Activated T-helper 2 cell treated with anti-CD3 and anti-CD28 coated beads, Interferon-gamma antibody, Interleukin-2, Interleukin-4, amounts not matched to agents 10 μg/mL and 5 μg/mL and 100 μg/mL, durations not matched to agents 14 hours and 24 hours and 36 hours (primary cell): ENCODE measurements at regions of chr6 and their contacts with region 1.

Region 1: DNA sequence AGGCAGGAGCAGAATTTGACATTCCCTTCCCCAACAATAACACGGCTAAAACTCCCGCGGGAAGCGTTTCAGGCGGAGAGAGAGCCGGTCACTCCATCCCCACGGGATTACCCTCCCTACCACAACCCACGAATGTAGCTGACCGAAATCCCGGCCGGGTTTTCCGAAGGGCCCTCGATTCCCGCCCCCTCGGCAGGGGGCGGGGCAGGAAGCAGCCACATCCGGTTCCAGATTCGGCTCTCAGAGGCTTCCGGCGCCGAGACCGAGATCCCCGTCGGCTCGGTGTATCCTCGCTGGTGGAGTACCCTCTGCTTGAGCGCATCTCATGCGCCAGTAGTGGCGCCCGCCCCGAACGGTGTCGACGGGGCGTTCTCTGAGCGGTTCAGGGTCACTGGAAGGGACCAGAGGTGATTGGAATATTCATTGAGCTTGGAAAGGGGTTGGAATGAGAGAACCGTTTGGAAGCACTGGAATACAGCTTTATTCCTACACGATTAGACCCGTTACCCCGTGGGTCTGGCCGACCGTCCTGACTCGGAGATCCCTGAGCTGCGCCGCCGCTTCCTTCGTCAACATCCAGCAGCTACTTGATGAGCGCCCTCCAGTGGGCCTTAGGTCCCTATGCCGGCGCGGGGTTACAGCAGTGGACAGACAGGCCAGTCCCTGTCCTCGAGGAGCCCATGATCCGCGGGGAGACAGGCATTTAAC is 649 bp upstream of the RGL2 start:
- DNase-seq: peak; percentile 92
- H3K4me3 Mint-ChIP-seq: peak overlapping the region; percentile 93
- H3K27ac Mint-ChIP-seq: peak overlapping the region; percentile 99
- H3K4me1 Mint-ChIP-seq: peaks cover 24% of the 10 kb centered on the region
- H3K27me3 Mint-ChIP-seq: no peaks in the 10 kb centered on the region

Region 2: GRCh38 chr6:33276864-33277662 is 22.3 kb before region 1 on chr6 and contains the start of gene B3GALT4:
- intact Hi-C with region 1: loop called (anchors 2 kb)
- DNase-seq: peak; percentile 73
- H3K4me3 Mint-ChIP-seq: peak within 1 kb of the TSS; percentile 98
- H3K27ac Mint-ChIP-seq: peak within 1 kb of the TSS; percentile 89
- H3K4me1 Mint-ChIP-seq: peaks cover 35% of the 10 kb centered on the region
- H3K27me3 Mint-ChIP-seq: no peaks in the 10 kb centered on the region
- total RNA-seq, gene B3GALT4: 5.1 and 6.5 TPM in 2 replicates

Region 3: DNA sequence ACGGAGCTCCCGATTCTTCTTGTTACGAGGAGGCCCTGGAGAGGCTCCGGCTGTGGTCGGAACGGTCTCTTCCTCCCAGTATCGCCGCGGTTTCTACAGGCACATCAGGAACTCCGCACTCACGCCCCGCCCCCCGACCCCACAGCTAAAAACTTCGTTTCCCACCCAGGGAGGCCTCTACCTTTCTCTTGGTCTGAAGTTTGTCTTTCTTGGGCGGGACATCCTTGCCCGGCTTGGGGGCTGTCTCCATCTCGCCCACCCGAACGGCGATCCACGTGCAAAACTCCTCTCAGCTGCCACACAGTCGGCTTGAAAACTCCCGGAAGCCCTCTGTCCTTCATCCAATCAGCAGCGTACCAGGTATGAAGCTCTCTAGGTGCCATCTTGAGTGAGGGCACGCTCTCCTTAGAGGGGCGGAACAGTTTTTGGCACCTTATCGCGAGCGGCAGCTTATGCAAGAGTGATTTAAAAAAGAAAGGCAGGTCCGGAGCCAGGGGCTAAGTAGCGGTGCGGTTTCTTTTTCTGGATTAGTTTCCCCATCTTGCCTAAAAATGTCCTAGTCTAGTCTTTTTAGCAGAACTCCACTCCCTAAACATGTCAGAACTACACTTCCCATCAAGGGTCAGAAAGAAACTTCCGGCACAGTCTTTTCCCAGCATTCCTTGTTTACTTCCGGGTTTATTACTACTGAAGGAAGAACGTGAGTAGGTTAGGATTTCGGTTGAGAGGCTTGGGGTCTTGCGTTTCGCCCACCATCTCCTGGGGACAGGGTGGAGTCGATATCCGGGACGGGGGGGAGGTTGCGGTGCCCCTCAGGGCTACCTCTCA is 10.3 kb before region 1 on chr6 and contains the starts of genes PFDN6 and WDR46:
- intact Hi-C with region 1: loop called (anchors 1 kb)
- DNase-seq: peak; percentile 83
- H3K4me3 Mint-ChIP-seq: peak within 1 kb of the TSS; percentile 98
- H3K27ac Mint-ChIP-seq: peak within 1 kb of the TSS; percentile 88
- H3K4me1 Mint-ChIP-seq: peaks cover 25% of the 10 kb centered on the region
- H3K27me3 Mint-ChIP-seq: no peaks in the 10 kb centered on the region
- total RNA-seq, gene PFDN6: 104 and 117 TPM in 2 replicates
- total RNA-seq, gene WDR46: 87.3 and 98.3 TPM in 2 replicates

Region 4: GRCh38 chr6:33312409-33313158 is 13.2 kb after region 1 on chr6:
- intact Hi-C with region 1: loop called (anchors 1 kb)
- DNase-seq: peak; percentile 78
- H3K4me3 Mint-ChIP-seq: peak overlapping the region; percentile 99
- H3K27ac Mint-ChIP-seq: peak overlapping the region; percentile 98
- H3K4me1 Mint-ChIP-seq: peaks cover 32% of the 10 kb centered on the region
- H3K27me3 Mint-ChIP-seq: no peaks in the 10 kb centered on the region

Region 5: GRCh38 chr6:33407132-33407718 is 107.8 kb after region 1 on chr6:
- intact Hi-C with region 1: no loop called
- DNase-seq: no peak
- H3K4me3 Mint-ChIP-seq: no peak overlapping the region
- H3K27ac Mint-ChIP-seq: peak overlapping the region; percentile 24
- H3K4me1 Mint-ChIP-seq: peaks cover 29% of the 10 kb centered on the region
- H3K27me3 Mint-ChIP-seq: no peaks in the 10 kb centered on the region

Region 6: GRCh38 chr6:33417903-33418689 is 118.7 kb after region 1 on chr6 and contains the start of gene CUTA:
- intact Hi-C with region 1: loop called (anchors 5 kb)
- DNase-seq: peak; percentile 99
- H3K4me3 Mint-ChIP-seq: peak within 1 kb of the TSS; percentile 96
- H3K27ac Mint-ChIP-seq: peak within 1 kb of the TSS; percentile 100
- H3K4me1 Mint-ChIP-seq: peaks cover 57% of the 10 kb centered on the region
- H3K27me3 Mint-ChIP-seq: no peaks in the 10 kb centered on the region
- total RNA-seq, gene CUTA: 143 and 146 TPM in 2 replicates